ENCODE measurements at regions of chr7 and their contacts with region 1.

Region 1: GRCh38 chr7:50467817-50468610 is 17.9 kb upstream of the FIGNL1 start:
- DNase-seq: peak; percentile 82 to 94 (median 91)
- ATAC-seq: peak; percentile 89 to 91
- H3K4me3 ChIP-seq: no peak overlapping the region
- H3K27ac ChIP-seq: no peak overlapping the region
- H3K4me1 ChIP-seq: no peaks in the 10 kb centered on the region
- H3K27me3 ChIP-seq: no peaks in the 10 kb centered on the region

Region 2: DNA sequence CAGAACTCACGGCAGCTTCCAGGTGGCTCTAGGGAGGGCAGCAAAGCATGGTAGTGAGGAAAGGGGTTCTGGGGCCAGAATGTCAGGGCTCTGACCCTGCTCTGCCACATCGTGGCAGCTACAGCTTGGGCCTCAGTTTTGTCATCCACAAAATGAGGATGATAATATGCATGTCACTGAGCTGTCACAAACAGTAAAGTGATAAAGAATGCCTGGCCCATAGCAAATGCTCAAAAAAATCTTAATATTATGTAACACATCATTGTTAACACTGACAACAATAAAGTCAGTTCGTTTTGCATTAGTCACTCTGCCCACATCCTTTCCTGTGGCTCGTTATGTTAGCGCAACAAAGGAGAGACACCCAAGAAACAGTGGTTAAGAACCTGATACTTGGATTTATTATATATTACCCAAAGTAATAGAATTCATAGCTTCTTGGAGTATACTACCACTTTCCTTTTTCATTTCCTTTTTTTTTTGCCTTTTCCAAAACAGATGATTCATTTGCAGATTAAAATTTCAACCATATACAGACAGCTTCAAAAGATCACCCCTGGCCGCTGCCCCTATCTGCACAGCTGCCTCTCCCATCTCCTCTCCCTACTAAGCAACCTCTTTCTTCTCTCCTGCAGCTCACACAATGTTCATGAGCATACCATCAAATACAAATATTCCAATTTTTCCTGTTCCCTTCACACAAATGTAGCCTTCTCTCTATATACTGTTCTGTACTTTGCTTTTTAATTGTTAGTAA is 142.7 kb after region 1 on chr7:
- intact Hi-C with region 1: loop called in 2 of 4 experiments (anchors 10 kb)
- DNase-seq: no peak
- ATAC-seq: no peak
- H3K4me3 ChIP-seq: no peak overlapping the region
- H3K27ac ChIP-seq: no peak overlapping the region
- H3K4me1 ChIP-seq: no peaks in the 10 kb centered on the region
- H3K27me3 ChIP-seq: no peaks in the 10 kb centered on the region

Region 3: DNA sequence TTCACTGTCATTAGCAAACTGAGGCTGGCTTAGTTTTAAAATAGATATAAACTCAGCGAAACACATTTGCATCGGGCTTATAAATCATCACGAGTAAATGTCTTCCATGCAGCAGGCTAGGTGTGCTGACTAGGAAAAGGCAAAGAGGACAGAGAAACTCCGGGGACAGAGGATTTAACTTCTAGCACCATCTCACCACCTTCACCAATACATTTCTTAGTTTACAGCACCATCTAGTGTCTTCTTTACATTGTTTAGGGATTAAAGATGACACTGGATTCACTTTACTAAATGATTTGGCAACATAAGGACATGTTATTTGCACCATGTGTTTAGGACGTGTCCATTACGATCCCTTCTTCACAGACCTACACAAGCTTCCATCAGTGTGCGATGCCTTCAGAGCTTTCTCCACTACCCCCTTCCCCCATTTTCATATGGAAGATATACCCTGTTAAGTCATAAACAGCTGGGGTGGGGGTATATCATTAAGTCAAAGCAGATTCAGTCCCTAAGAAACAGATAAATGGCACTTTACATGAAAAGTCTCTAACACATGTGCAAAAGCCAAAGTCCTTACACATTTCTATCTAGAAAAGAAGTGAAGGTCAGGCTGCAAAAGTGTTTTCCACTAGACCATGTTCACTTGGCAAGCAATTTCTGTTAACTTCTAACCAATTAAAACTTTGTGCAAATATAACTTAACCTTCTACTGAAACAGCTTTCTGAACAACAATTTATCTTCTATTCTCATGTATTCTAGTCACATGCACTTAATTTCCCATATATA is 211.4 kb after region 1 on chr7:
- intact Hi-C with region 1: loop called in 3 of 4 experiments (anchors 5 to 10 kb)
- DNase-seq: no peak
- ATAC-seq: peak; percentile 62 to 67
- H3K4me3 ChIP-seq: no peak overlapping the region
- H3K27ac ChIP-seq: peak overlapping the region; percentile 61
- H3K4me1 ChIP-seq: peaks cover 15% of the 10 kb centered on the region
- H3K27me3 ChIP-seq: no peaks in the 10 kb centered on the region

Region 4: GRCh38 chr7:51067757-51068156 is 599.7 kb after region 1 on chr7:
- intact Hi-C with region 1: loop called in 1 of 4 experiments (anchors 10 kb)
- DNase-seq: peak in 2 of 3 donors; percentile 71 to 82
- ATAC-seq: peak; percentile 34 to 45
- H3K4me3 ChIP-seq: no peak overlapping the region
- H3K27ac ChIP-seq: no peak overlapping the region
- H3K4me1 ChIP-seq: peaks cover 3% of the 10 kb centered on the region
- H3K27me3 ChIP-seq: no peaks in the 10 kb centered on the region

Region 5: DNA sequence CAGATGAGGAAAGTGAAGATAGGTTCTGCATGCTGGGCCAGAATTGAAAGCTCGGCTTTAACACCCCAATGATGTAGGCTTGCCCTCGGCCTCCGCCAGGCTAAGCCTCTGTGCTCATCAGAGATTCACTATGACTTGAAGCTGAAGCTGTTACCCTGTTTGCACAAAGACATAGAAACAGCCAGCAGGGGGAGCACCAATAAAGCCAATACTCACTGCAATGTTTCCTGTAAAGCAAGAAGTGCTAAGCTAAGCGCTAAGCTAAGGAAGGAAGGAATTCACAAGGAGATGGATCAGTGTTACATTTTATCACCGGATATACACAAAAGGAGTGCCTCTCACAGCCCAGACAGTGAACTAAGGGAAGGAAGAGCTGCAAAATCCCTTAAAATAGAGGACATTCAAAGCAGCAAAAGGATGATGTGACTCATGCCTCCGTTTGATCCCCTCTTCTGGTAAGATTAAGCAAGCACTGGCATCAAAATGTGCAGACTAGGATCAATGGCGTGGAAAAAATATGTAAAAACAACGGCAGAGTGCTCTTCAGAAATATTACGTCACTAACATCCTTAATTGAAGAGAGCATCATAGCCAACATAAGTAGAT is 694.8 kb after region 1 on chr7:
- intact Hi-C with region 1: loop called (anchors 5 to 10 kb)
- DNase-seq: peak; percentile 56 to 61 (median 60)
- ATAC-seq: peak; percentile 87 to 90
- H3K4me3 ChIP-seq: no peak overlapping the region
- H3K27ac ChIP-seq: no peak overlapping the region
- H3K4me1 ChIP-seq: no peaks in the 10 kb centered on the region
- H3K27me3 ChIP-seq: no peaks in the 10 kb centered on the region

Region 6: DNA sequence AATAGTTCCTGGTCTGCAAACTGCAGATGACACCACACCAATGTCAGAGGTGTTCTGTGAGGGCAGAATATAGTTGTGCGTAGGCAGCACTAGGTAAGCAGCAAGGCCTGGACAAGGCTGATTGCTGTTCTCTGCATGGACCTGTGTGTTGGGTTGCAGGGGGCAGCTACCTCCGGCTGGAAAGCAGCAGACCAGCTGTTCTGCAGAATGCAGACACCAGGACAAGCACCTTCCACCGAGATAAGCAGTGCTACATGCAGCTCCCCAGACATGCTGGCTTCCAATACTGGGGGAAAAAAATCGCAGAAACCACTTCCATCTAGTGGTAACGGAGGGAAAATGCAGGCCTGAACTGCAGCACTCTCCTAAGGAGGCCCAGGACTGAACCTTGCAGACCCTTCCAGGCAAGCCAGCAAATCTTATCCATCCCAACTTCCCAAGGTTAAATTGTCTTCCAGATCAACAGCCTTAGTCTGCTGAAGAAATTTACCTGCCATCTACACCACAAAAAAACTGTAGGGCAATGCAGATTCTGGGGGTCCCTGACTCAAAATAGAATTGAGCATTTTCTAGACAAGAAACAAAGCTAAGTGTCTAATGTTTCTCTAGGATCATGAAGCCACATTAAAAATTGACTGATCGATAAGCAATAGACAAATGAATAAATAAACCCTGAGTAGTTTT is 899.1 kb after region 1 on chr7:
- intact Hi-C with region 1: loop called in 1 of 4 experiments (anchors 10 kb)
- DNase-seq: no peak
- ATAC-seq: peak; percentile 83 to 85
- H3K4me3 ChIP-seq: no peak overlapping the region
- H3K27ac ChIP-seq: no peak overlapping the region
- H3K4me1 ChIP-seq: no peaks in the 10 kb centered on the region
- H3K27me3 ChIP-seq: no peaks in the 10 kb centered on the region

Measured in right cardiac atrium (tissue), 5 donors.